GM12878 (cell line): ENCODE measurements at regions of chr6 and their contacts with region 1.

Region 1: GRCh38 chr6:116253505-116254296 is at the start of gene TSPYL4:
- DNase-seq: peak; percentile 87
- ATAC-seq: peak; percentile 96
- H3K4me3 ChIP-seq: peak within 1 kb of the TSS; percentile 94
- H3K27ac ChIP-seq: peak within 1 kb of the TSS; percentile 90
- H3K4me1 ChIP-seq: peaks cover 13% of the 10 kb centered on the region
- H3K27me3 ChIP-seq: no peaks in the 10 kb centered on the region
- CTCF ChIP-seq: no peak
- EP300 ChIP-seq: no peak
- POLR2A ChIP-seq: peak; percentile 84
- RAD21 ChIP-seq: no peak
- polyA plus RNA-seq, gene TSPYL4: 1.5 to 2.2 TPM

Region 2: DNA sequence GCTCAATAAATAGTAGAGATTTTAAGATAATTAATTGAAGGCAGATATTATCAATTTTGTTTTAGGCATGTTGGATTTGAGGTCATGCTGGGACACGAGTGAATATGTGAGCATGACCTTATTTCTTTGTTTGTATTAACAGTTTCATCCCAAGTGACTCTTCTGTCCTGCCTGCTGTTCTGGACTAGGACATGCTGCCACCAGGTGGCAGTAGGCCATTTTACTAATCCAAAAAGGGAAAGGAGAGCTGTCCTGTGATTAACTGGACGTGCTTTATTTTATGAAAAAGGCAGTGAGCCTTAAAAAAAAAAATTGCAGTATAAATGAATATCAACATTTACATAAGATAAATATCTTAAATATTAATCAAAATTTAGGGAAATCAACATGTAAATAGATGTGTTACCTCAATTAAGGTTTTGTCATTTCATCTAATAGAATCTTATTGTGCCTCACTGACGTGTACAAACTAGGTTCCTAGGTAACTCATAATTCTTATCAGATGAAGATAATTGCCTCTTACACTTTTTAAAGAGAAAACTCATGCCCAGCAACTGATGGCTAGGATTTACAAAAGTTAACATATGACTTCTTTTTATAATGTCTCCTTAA is 242.8 kb before region 1 on chr6:
- CTCF ChIA-PET with region 1: interaction called, 3 read pairs
- POLR2A ChIA-PET with region 1: interaction called, 4 read pairs
- RAD21 ChIA-PET with region 1: interaction called, 3 read pairs
- SMC1A ChIA-PET with region 1: no interaction called
- in situ Hi-C with region 1: no loop called
- intact Hi-C with region 1: loop called (anchors 10 kb)
- DNase-seq: no peak
- ATAC-seq: peak; percentile 67
- H3K4me3 ChIP-seq: peak overlapping the region; percentile 9; the same call in 1 of the 2 replicates
- H3K27ac ChIP-seq: peak overlapping the region; percentile 59
- H3K4me1 ChIP-seq: peaks cover 53% of the 10 kb centered on the region
- H3K27me3 ChIP-seq: no peaks in the 10 kb centered on the region
- CTCF ChIP-seq: peak; percentile 82 to 88 (median 84)
- EP300 ChIP-seq: no peak
- POLR2A ChIP-seq: no peak
- RAD21 ChIP-seq: peak; percentile 95